RWPE1 (cell line): ENCODE measurements at regions of chr10 and their contacts with region 1.

Region 1: DNA sequence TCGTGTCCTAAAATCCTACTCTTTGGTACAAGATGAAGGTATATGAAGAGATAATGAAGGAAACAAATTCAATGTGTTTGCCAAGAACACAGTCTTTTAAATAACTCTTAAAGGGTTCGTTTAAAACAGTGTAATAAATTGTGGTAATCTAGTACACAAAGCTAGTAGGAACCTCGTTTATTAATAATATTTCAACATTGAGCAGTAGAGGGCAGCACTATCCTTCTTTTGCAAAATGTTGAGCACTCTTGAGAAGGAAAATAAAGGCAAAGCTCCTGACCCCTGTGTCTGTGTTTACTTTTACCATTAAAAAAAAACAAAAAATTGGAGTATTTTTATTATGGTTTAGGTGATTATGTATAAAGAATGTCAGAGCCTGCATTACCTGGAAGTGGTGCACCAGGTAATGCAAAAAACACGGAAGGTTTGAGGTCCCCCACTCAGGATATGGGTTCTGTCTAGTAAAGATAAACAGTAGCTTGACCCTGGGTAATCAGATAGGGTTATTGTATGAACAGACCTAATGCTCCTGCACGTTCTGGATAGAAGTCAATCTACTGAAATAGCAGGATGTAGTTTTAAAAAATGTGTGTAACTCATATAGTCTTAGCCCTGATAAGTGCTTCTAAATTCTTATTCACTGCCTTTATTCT is 5.7 kb upstream of the GOT1 start:
- DNase-seq: no peak
- H3K27ac ChIP-seq: no peak overlapping the region
- CTCF ChIP-seq: peak; percentile 71

Region 2: DNA sequence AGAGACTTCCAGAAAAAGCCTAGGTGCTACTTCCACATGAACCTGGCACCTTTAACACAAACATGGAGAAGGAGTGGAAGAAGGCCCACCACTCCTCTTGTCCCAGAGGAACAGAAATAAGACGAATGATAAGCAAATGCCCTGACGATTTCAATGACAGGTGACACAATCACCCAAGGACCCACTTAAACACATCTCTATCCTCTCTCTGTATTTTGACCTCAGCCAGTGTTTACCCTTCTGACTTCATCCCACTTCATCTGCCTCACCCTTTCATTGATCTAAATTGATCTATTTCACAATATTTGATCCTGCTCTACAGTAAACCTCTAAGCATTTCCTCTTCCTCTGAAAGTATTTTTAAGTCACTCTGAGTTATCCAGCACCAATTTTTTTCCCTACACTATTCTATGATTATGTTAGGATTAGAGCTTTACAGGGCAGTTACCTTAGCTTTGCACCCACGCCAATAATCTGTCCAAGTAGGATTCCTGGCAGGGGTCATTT is 14.8 kb before region 1 on chr10:
- CTCF ChIA-PET with region 1: no interaction called
- POLR2A ChIA-PET with region 1: no interaction called
- DNase-seq: no peak
- H3K27ac ChIP-seq: no peak overlapping the region
- CTCF ChIP-seq: no peak

Region 3: GRCh38 chr10:99449023-99449422 is 12.9 kb after region 1 on chr10:
- CTCF ChIA-PET with region 1: interaction called, 24 read pairs
- POLR2A ChIA-PET with region 1: no interaction called
- DNase-seq: no peak
- H3K27ac ChIP-seq: no peak overlapping the region
- CTCF ChIP-seq: no peak

Region 4: DNA sequence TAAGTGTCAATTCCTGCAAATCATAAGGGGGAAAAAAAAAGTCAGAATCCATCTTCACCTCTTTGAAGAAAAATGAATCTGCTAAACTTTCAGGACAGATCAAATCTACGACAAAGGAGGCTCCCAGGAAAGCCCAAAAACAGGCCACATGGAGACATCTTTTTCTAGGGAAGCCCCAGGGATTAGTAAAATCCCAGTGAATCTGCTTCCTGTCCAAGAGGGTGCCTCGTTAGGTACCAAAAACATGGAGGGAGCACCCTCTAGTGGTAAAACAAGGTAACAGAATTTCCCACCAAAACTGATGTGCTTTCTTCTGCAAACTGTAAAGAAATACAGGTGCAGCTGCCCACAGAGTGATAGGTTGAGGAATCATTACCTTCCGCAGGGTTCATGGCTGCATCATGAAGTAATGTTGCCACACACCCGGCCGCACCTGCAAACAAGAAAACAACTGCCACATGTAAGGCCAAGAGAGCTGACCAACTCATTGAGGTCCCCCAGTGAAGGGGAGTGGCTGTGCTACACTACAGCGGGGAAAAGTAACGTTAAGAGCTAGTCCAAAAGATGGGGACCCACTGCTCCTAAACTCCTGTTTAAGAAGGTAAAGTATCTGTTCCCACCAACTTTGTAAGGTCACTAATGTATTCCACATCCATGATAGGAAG is 176.2 kb after region 1 on chr10:
- CTCF ChIA-PET with region 1: interaction called, 23 read pairs
- POLR2A ChIA-PET with region 1: no interaction called
- DNase-seq: peak; percentile 72
- H3K27ac ChIP-seq: no peak overlapping the region; the same call in 1 of the 2 replicates
- CTCF ChIP-seq: peak; percentile 82